Endothelial cell of umbilical vein (primary cell): ENCODE measurements at regions of chr12 and their contacts with region 1.

Region 1: DNA sequence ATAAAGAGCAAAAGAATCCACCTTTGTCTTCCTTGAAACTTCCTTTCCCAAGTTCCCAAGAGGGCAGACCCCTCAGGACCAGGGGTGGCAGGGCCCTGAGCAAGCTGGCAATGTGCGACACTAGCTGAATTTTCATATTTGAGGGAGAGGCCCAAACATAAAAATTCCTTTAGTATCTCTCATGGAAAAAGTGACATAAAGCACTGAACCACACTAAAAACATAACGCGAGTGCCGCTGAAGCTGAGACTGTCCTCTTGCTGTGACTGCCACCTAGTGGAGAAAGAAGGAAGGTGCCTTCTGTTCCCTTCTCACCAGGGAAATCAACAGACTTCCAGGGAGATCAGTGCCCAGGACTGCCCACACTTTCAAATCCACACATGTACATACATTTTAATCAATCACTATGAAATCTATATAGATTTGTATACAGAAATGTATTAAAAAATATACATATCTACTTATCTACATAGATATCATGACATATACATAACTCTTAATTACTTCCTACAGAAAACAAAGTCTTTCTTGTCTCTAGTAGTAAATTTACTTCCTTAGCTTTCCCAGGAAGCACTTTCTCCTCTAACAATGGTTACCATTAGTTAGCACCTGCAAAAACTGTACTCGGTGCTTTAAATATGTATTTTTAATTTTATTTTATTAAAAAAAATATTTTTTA is 53.8 kb downstream of the SSH1 start:
- DNase-seq: peak; percentile 94
- H3K4me3 ChIP-seq: no peak overlapping the region
- H3K27ac ChIP-seq: peak overlapping the region; percentile 90
- H3K4me1 ChIP-seq: peaks cover 31% of the 10 kb centered on the region
- H3K27me3 ChIP-seq: no peaks in the 10 kb centered on the region
- CTCF ChIP-seq: peak; percentile 82 to 85
- POLR2A ChIP-seq: no peak

Region 2: DNA sequence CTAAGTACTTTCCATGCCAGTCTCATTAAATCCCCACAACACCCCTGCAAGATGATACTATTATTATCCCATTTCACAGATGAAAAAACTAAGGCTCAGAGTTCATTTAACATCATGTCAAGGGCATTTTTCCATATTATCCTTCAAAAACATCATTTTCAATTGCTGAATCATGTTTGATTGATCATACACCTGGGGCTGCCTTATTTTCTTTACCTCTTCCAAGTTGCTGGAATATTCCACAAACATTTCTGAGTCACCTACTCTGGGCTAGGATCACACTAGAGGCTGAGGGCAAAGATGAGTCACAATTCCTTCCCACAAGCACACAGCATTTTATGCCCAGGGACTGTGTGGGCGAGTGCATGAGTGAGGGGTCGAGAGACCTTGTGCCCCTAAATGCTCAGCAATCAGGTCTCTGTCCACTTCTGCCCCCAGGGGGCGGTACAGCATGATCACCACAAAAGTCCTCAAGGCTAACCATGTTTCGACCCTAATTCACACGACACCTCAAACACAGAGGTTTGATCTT is 191.6 kb before region 1 on chr12:
- CTCF ChIA-PET with region 1: interaction called, 48 read pairs
- POLR2A ChIA-PET with region 1: no interaction called
- dilution Hi-C with region 1: no loop called
- intact Hi-C with region 1: loop called (anchors 1 kb)
- DNase-seq: peak; percentile 58
- H3K4me3 ChIP-seq: no peak overlapping the region
- H3K27ac ChIP-seq: no peak overlapping the region
- H3K4me1 ChIP-seq: peaks cover under 1% of the 10 kb centered on the region
- H3K27me3 ChIP-seq: no peaks in the 10 kb centered on the region
- CTCF ChIP-seq: peak; percentile 58 to 61
- POLR2A ChIP-seq: no peak

Region 3: GRCh38 chr12:108643941-108644810 is 159.4 kb before region 1 on chr12:
- CTCF ChIA-PET with region 1: interaction called, 13 read pairs
- POLR2A ChIA-PET with region 1: no interaction called
- dilution Hi-C with region 1: no loop called
- intact Hi-C with region 1: loop called (anchors 1 kb)
- DNase-seq: peak; percentile 92
- H3K4me3 ChIP-seq: no peak overlapping the region
- H3K27ac ChIP-seq: peak overlapping the region; percentile 76
- H3K4me1 ChIP-seq: peaks cover 48% of the 10 kb centered on the region
- H3K27me3 ChIP-seq: no peaks in the 10 kb centered on the region
- CTCF ChIP-seq: no peak
- POLR2A ChIP-seq: no peak

Region 4: GRCh38 chr12:108691175-108691997 is 112.2 kb before region 1 on chr12:
- CTCF ChIA-PET with region 1: interaction called, 20 read pairs
- POLR2A ChIA-PET with region 1: no interaction called
- dilution Hi-C with region 1: no loop called
- intact Hi-C with region 1: loop called (anchors 1 kb)
- DNase-seq: peak; percentile 99
- H3K4me3 ChIP-seq: peak overlapping the region in 1 of 3 experiments; percentile 7
- H3K27ac ChIP-seq: peak overlapping the region; percentile 89
- H3K4me1 ChIP-seq: peaks cover 49% of the 10 kb centered on the region
- H3K27me3 ChIP-seq: no peaks in the 10 kb centered on the region
- CTCF ChIP-seq: peak in 1 of 2 donors; percentile 31
- POLR2A ChIP-seq: peak; percentile 56

Region 5: GRCh38 chr12:108826101-108826806 is 22.7 kb after region 1 on chr12:
- CTCF ChIA-PET with region 1: interaction called, 36 read pairs
- POLR2A ChIA-PET with region 1: interaction called, 3 read pairs
- dilution Hi-C with region 1: no loop called
- intact Hi-C with region 1: loop called (anchors 1 kb)
- DNase-seq: peak; percentile 98
- H3K4me3 ChIP-seq: peak overlapping the region in 1 of 3 experiments; percentile 49
- H3K27ac ChIP-seq: peak overlapping the region; percentile 100
- H3K4me1 ChIP-seq: peaks cover 71% of the 10 kb centered on the region
- H3K27me3 ChIP-seq: no peaks in the 10 kb centered on the region
- CTCF ChIP-seq: peak in 1 of 2 donors; percentile 23
- POLR2A ChIP-seq: peak; percentile 31

Region 6: GRCh38 chr12:108850854-108851573 is 47.4 kb after region 1 on chr12:
- CTCF ChIA-PET with region 1: interaction called, 67 read pairs
- POLR2A ChIA-PET with region 1: interaction called, 5 read pairs
- dilution Hi-C with region 1: no loop called
- intact Hi-C with region 1: loop called (anchors 1 kb)
- DNase-seq: peak; percentile 95
- H3K4me3 ChIP-seq: peak overlapping the region in 2 of 3 experiments; percentile 47 to 74
- H3K27ac ChIP-seq: peak overlapping the region; percentile 98
- H3K4me1 ChIP-seq: peaks cover 51% of the 10 kb centered on the region
- H3K27me3 ChIP-seq: no peaks in the 10 kb centered on the region
- CTCF ChIP-seq: peak; percentile 20 to 28
- POLR2A ChIP-seq: no peak

Region 7: DNA sequence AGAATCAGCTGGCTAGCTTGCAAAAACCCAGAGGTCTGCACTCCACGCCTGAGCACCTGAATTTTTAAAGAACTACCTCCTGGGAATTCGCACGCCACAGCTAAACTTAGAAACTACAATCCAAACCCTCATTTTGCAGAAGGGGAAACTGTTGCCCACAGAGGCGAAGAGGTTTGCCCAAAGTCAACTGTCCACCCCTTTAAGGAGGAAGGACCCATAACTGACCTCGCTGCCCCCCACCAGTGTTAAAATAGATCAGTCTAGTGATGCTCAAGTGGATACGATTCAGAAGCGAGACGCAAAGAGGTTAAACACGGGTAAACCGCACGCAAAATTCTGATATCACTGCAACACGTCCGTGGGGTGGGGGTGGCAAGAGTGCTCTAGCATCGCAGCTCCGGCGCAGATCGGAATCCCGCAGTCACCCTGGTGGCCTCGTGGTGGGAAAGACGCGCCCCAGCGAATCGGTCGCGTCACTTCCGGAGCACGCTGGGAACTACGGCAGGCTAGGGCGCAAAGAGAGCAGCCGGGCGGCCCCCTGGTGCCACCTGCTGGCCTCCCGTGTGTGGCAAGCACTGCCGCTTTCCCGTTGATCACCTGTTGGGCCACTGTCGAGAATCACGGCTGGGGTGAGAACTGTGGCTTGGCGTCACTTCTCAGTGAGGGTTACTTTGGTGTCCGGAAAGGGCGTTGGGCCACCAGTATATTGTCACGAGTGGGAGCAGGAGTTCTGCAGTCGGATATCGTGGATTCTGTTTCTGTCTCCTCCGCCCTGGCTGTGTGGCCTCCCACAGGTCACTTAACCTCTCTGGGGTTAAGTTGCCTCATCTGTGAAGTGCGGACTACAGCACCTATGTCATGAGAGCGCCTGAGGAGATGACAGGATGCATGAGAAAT is 289.7 kb after region 1 on chr12 and contains the start of gene ALKBH2:
- CTCF ChIA-PET with region 1: interaction called, 11 read pairs
- POLR2A ChIA-PET with region 1: no interaction called
- dilution Hi-C with region 1: no loop called
- intact Hi-C with region 1: loop called (anchors 1 kb)
- DNase-seq: peak; percentile 89
- H3K4me3 ChIP-seq: peak within 1 kb of the TSS in 2 of 3 experiments; percentile 33 to 41
- H3K27ac ChIP-seq: peak within 1 kb of the TSS; percentile 43
- H3K4me1 ChIP-seq: peaks cover 7% of the 10 kb centered on the region
- H3K27me3 ChIP-seq: no peaks in the 10 kb centered on the region
- CTCF ChIP-seq: peak; percentile 99 to 100
- POLR2A ChIP-seq: peak; percentile 67
- total RNA-seq, gene ALKBH2: 5.4 TPM in 2 replicates